Endothelial cell of umbilical vein (primary cell): ENCODE measurements at regions of chr2 and their contacts with region 1.

Region 1: DNA sequence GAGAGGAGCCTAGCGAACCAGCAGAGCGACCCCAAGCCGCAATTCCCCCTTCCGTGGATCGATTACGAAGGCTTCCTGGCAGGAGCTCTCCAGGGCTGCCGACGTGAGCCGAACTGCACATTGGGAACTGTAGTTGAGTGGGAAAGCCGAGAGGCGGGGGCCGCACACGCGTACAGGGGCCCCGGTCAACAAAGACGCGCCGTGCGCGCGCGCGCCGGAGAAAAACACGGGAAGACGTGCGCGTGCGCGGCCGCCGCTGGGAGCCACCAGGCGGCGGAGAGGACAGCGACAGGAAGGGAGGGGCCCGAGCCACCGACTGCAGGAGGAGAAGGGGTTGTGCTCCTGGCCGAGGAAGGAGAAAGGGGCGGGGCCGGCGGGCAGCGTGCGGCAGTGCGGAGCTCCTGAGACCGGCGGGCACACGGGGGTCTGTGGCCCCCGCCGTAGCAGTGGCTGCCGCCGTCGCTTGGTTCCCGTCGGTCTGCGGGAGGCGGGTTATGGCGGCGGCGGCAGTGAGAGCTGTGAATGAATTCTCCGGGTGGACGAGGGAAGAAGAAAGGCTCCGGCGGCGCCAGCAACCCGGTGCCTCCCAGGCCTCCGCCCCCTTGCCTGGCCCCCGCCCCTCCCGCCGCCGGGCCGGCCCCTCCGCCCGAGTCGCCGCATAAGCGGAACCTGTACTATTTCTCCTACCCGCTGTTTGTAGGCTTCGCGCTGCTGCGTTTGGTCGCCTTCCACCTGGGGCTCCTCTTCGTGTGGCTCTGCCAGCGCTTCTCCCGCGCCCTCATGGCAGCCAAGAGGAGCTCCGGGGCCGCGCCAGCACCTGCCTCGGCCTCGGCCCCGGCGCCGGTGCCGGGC is at the start of gene SPAST:
- DNase-seq: peak; percentile 99
- H3K4me3 ChIP-seq: peak within 1 kb of the TSS; percentile 61 to 84 (median 80)
- H3K27ac ChIP-seq: peak within 1 kb of the TSS; percentile 64
- H3K4me1 ChIP-seq: peaks cover 21% of the 10 kb centered on the region
- H3K27me3 ChIP-seq: no peaks in the 10 kb centered on the region
- CTCF ChIP-seq: peak; percentile 38 to 56
- POLR2A ChIP-seq: peak; percentile 93
- total RNA-seq, gene SPAST: 23.0 and 24.9 TPM in 2 replicates

Region 2: GRCh38 chr2:32010670-32011484 is 52.7 kb before region 1 on chr2 and contains the start of gene MEMO1:
- CTCF ChIA-PET with region 1: interaction called, 3 read pairs
- POLR2A ChIA-PET with region 1: interaction called, 4 read pairs
- dilution Hi-C with region 1: no loop called
- intact Hi-C with region 1: loop called (anchors 1 kb)
- DNase-seq: peak; percentile 96
- H3K4me3 ChIP-seq: peak within 1 kb of the TSS; percentile 44 to 81 (median 73)
- H3K27ac ChIP-seq: peak within 1 kb of the TSS; percentile 80
- H3K4me1 ChIP-seq: peaks cover 20% of the 10 kb centered on the region
- H3K27me3 ChIP-seq: no peaks in the 10 kb centered on the region
- CTCF ChIP-seq: no peak
- POLR2A ChIP-seq: peak; percentile 90
- total RNA-seq, gene MEMO1: 53.9 and 56.2 TPM in 2 replicates

Region 3: GRCh38 chr2:32039447-32040219 is 23.9 kb before region 1 on chr2 and contains the start of gene DPY30:
- CTCF ChIA-PET with region 1: interaction called, 42 read pairs
- POLR2A ChIA-PET with region 1: interaction called, 17 read pairs
- dilution Hi-C with region 1: no loop called
- intact Hi-C with region 1: loop called (anchors 1 kb)
- DNase-seq: peak; percentile 96
- H3K4me3 ChIP-seq: peak within 1 kb of the TSS; percentile 84 to 95 (median 94)
- H3K27ac ChIP-seq: peak within 1 kb of the TSS; percentile 60
- H3K4me1 ChIP-seq: peaks cover 10% of the 10 kb centered on the region
- H3K27me3 ChIP-seq: no peaks in the 10 kb centered on the region
- CTCF ChIP-seq: no peak
- POLR2A ChIP-seq: peak; percentile 99
- total RNA-seq, gene DPY30: 77.5 and 83.4 TPM in 2 replicates

Region 4: GRCh38 chr2:32135409-32135808 is 71.9 kb after region 1 on chr2:
- CTCF ChIA-PET with region 1: interaction called, 3 read pairs
- POLR2A ChIA-PET with region 1: no interaction called
- dilution Hi-C with region 1: no loop called
- intact Hi-C with region 1: loop called (anchors 2 kb)
- DNase-seq: peak; percentile 69
- H3K4me3 ChIP-seq: no peak overlapping the region
- H3K27ac ChIP-seq: no peak overlapping the region
- H3K4me1 ChIP-seq: no peaks in the 10 kb centered on the region
- H3K27me3 ChIP-seq: no peaks in the 10 kb centered on the region
- CTCF ChIP-seq: peak in 1 of 2 donors; percentile 10
- POLR2A ChIP-seq: no peak

Region 5: GRCh38 chr2:32168513-32168912 is 105.0 kb after region 1 on chr2:
- CTCF ChIA-PET with region 1: interaction called, 4 read pairs
- POLR2A ChIA-PET with region 1: interaction called, 11 read pairs
- dilution Hi-C with region 1: no loop called
- intact Hi-C with region 1: loop called (anchors 1 kb)
- DNase-seq: no peak
- H3K4me3 ChIP-seq: no peak overlapping the region
- H3K27ac ChIP-seq: no peak overlapping the region
- H3K4me1 ChIP-seq: peaks cover 11% of the 10 kb centered on the region
- H3K27me3 ChIP-seq: no peaks in the 10 kb centered on the region
- CTCF ChIP-seq: no peak
- POLR2A ChIP-seq: no peak

Region 6: GRCh38 chr2:32277674-32278482 is 214.3 kb after region 1 on chr2 and contains the start of gene YIPF4:
- CTCF ChIA-PET with region 1: no interaction called
- POLR2A ChIA-PET with region 1: no interaction called
- dilution Hi-C with region 1: no loop called
- intact Hi-C with region 1: loop called (anchors 5 kb)
- DNase-seq: peak; percentile 97
- H3K4me3 ChIP-seq: peak within 1 kb of the TSS; percentile 86 to 94 (median 88)
- H3K27ac ChIP-seq: peak within 1 kb of the TSS; percentile 80
- H3K4me1 ChIP-seq: peaks cover 11% of the 10 kb centered on the region
- H3K27me3 ChIP-seq: peaks cover 0 to 2% of the 10 kb centered on the region in 2 experiments
- CTCF ChIP-seq: no peak
- POLR2A ChIP-seq: peak; percentile 69
- total RNA-seq, gene YIPF4: 40.1 and 45.0 TPM in 2 replicates

Region 7: GRCh38 chr2:32356735-32357644 is 293.5 kb after region 1 on chr2 and contains the start of gene BIRC6:
- CTCF ChIA-PET with region 1: no interaction called
- POLR2A ChIA-PET with region 1: no interaction called
- dilution Hi-C with region 1: no loop called
- intact Hi-C with region 1: loop called (anchors 1 kb)
- DNase-seq: peak; percentile 97
- H3K4me3 ChIP-seq: peak within 1 kb of the TSS; percentile 68 to 92 (median 84)
- H3K27ac ChIP-seq: peak within 1 kb of the TSS; percentile 77
- H3K4me1 ChIP-seq: peaks cover 13% of the 10 kb centered on the region
- H3K27me3 ChIP-seq: no peaks in the 10 kb centered on the region
- CTCF ChIP-seq: no peak
- POLR2A ChIP-seq: peak; percentile 96
- total RNA-seq, gene BIRC6: 75.7 and 83.1 TPM in 2 replicates